A549 (cell line): ENCODE measurements at regions of chr9 and their contacts with region 1.

Region 1: DNA sequence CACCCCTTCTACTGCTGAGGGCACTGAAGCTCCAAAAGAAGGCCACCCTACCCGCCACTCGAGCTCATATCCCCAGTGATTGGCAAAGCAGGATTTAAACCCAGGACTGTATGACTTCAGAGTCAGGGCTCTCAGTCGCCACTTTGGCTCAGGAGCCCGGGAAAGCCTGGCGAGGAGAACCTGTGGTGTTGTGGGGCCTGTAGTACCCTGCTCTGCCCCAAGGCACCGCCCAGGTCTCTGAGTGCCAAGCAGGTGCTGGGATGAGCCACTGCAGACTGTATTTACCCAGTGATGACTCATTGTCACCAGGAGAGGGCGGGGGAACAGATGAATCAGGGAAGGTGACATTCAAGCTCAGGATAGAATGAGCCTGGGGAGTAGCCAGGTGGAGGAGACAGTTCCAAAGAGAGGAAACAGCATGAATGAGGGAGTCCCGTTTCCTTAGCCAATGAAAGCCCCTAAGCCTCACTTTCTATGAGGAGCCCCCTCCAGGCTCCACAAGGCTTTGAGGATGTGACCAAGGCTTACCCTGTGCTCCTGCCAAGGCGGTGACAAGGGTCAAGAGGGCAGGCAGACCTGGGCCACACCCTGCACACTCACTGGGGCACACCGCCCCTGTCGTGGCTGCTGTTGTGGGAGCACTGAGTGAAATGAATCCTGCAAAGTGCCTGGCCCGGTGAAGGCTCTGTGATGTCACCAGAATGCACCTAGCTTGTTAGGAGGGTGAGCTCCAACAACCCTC is 17.8 kb upstream of the DPM2 start:
- DNase-seq: peak; percentile 89 to 99
- ATAC-seq: peak; percentile 91 to 92
- H3K4me3 ChIP-seq: peak overlapping the region; percentile 12; the same call in 1 of the 3 replicates
- H3K27ac ChIP-seq: peak overlapping the region; percentile 75 to 84
- H3K4me1 ChIP-seq: peaks cover 61% of the 10 kb centered on the region
- CTCF ChIP-seq: 0 out of 3 replicates have a peak, but pooled peaks have one; percentile 15
- EP300 ChIP-seq: no peak; a peak in 1 of 5 replicates
- POLR2A ChIP-seq: no peak
- RAD21 ChIP-seq: peak; percentile 37 to 42; a peak in 2 of 5 replicates

Region 2: GRCh38 chr9:127980706-127981558 is 25.5 kb after region 1 on chr9 and contains the start of gene EEIG1:
- CTCF ChIA-PET with region 1: interaction called, 53 read pairs
- POLR2A ChIA-PET with region 1: interaction called, 10 read pairs
- DNase-seq: peak; percentile 85 to 88
- ATAC-seq: peak; percentile 85 to 94
- H3K4me3 ChIP-seq: peak within 1 kb of the TSS; percentile 91
- H3K27ac ChIP-seq: peak within 1 kb of the TSS; percentile 97 to 98
- H3K4me1 ChIP-seq: peaks cover 44% of the 10 kb centered on the region
- CTCF ChIP-seq: no peak
- EP300 ChIP-seq: no peak
- POLR2A ChIP-seq: peak; percentile 78
- RAD21 ChIP-seq: peak in 1 of 2 experiments; percentile 10; a peak in 1 of 5 replicates
- polyA plus RNA-seq, gene EEIG1: 24.4 and 30.3 TPM in 2 replicates